ENCODE measurements at regions of chr3 and their contacts with region 1.

Region 1: DNA sequence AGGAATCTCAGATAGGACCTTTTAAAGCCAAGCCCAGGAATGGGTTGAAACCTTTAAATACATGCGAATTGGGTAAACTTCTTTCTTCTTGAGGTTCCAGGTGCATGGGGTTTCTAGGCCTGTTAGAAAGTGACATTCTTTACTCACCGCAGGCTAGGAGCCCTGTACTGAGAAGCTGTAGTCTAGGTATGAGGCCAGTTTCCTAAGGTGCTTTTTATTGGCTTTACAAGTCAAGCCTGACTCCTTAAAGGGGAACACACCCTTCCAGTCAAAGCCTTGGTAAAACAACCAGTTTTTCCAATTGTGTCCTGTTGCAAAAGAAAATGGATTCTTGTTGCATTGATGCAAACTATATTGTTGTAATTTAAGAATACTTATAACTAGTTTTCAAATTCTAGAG is 76.1 kb upstream of the ATP11B start:
- DNase-seq: no peak
- ATAC-seq: peak; percentile 83

Region 2: DNA sequence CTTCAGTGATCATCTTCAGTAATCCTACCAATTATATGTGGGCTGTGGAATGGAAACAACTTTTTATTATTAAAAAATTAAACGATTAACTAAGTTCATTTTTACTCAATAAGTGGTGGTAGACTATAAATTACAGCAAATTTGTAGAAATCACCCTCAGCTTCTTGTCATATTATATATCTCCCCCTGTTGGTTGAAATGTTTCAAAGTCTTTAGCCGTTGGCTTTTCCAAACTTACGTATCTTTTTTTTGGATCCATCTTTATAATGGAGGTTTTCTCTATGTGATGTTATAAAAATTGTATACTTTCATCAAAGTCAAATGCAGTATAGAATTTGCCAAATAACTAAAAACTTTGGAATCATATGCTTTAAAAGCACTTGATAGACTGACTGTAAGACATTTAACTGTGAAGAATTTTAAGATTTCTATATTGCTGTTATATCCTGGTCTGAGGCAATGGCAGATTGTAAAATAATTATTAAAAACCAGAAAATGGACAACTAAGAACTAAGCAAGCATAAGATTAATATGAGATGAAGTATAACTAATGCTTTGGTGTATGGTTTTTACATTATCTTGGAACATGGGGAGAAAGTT is 120.7 kb after region 1 on chr3:
- intact Hi-C with region 1: loop called in 1 of 2 experiments (anchors 5 kb)
- DNase-seq: no peak
- ATAC-seq: peak; percentile 54

Measured in left colon (tissue), 2 donors.